Activated T-helper 2 cell treated with anti-CD3 and anti-CD28 coated beads, Interferon-gamma antibody, Interleukin-2, Interleukin-4, amounts not matched to agents 10 μg/mL and 5 μg/mL and 100 μg/mL, durations not matched to agents 14 hours and 24 hours and 36 hours (primary cell): ENCODE measurements at regions of chrX and their contacts with region 1.

Region 1: DNA sequence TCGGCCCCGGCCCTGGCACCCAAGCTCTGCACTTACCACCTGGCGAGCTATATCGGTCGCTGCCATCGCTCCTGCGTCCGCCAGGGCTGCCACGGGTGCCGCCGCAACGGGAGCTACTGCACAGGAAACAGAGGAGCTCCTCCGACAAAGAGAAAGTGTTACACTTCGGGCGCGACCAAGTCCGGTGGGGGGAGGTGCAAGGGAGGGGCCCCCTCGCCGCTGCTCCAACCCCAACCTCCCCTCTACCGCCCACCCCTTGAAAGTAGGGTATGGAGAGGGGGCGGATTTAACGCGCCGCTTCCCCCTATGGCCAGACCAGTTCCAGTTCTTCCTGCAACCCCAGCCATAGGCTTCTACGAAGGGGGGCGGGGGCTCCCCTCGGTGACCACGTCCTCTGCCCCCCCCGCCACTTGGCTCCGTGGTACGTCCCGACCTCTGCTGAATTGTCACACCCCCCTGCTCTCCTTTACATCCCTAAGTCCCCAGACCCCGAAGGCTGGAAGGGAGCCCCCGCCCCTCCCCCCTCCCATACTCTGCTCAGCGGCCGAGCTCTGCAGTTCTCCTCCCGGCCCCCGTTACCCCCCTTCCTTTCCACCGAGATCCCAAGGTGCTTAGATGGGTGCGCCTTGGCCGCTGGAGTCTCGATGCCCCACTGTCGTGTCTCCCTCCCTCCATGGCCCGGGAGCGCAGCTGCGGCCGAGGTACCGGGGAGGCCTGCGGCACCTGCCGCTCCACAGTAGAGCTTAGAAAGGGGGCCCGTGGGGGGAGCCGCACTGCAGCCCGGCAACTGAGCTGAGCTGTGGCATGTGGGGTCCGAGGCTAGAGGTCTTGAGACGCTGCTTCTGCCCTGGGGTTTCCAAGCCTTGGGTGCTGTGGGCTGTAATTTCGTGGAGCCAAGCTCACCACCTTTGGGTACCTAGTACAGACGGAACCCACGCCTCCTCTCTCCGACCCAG is at the start of gene SEPTIN6:
- DNase-seq: peak; percentile 80
- H3K4me3 Mint-ChIP-seq: peak within 1 kb of the TSS; percentile 90
- H3K27ac Mint-ChIP-seq: peak within 1 kb of the TSS; percentile 100
- H3K4me1 Mint-ChIP-seq: peaks cover 10% of the 10 kb centered on the region
- H3K27me3 Mint-ChIP-seq: no peaks in the 10 kb centered on the region
- total RNA-seq, gene SEPTIN6: 175 and 179 TPM in 2 replicates

Region 2: DNA sequence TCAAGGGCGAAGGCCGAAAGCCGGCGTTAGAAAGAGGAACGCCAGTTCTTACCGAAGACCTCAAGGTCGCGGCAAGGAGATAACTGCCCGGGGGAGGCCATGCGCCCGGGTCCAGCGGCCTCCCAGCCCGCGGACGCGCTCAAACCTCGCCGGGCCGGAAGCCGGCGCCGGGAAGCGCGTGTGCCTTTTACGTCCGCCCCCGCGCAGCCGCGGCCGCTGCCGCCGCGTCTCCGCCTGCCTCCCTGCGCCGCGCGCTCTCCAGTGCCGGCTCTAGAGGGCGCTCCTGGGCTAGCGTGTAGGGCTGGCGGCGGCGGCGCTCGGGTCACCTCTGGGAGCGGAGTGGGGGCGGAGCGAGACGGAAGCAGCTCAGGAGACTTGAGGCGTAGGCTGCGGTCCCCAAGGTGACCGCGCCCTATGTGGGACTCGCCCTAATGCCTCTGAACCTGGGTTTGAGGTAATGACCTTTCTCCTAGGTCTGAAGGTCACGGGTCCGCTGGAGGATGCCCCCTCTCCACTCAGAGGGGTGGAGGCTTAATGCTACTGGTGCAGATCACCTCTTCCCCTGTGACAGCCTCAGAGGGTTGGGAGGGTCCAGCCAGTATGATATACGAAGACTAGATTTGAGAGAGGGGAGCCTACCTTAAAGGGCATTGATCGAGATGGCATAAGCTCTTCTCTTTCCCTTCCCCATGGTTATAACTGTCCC is 224.2 kb before region 1 on chrX:
- intact Hi-C with region 1: loop called (anchors 5 kb)
- DNase-seq: peak; percentile 84
- H3K4me3 Mint-ChIP-seq: peak overlapping the region; percentile 88
- H3K27ac Mint-ChIP-seq: peak overlapping the region; percentile 90
- H3K4me1 Mint-ChIP-seq: peaks cover 8% of the 10 kb centered on the region
- H3K27me3 Mint-ChIP-seq: no peaks in the 10 kb centered on the region

Region 3: GRCh38 chrX:119565107-119565663 is 128.1 kb before region 1 on chrX and contains the start of gene STEEP1:
- intact Hi-C with region 1: loop called (anchors 2 kb)
- DNase-seq: peak; percentile 82
- H3K4me3 Mint-ChIP-seq: peak within 1 kb of the TSS; percentile 93
- H3K27ac Mint-ChIP-seq: peak within 1 kb of the TSS; percentile 89
- H3K4me1 Mint-ChIP-seq: peaks cover 11% of the 10 kb centered on the region
- H3K27me3 Mint-ChIP-seq: no peaks in the 10 kb centered on the region
- total RNA-seq, gene STEEP1: 21.9 and 22.0 TPM in 2 replicates

Region 4: GRCh38 chrX:119606280-119607015 is 86.9 kb before region 1 on chrX and contains the start of gene NKRF:
- intact Hi-C with region 1: loop called (anchors 2 kb)
- DNase-seq: peak; percentile 86
- H3K4me3 Mint-ChIP-seq: peak within 1 kb of the TSS; percentile 97
- H3K27ac Mint-ChIP-seq: peak within 1 kb of the TSS; percentile 96
- H3K4me1 Mint-ChIP-seq: peaks cover 20% of the 10 kb centered on the region
- H3K27me3 Mint-ChIP-seq: no peaks in the 10 kb centered on the region
- total RNA-seq, gene NKRF: 25.1 and 25.9 TPM in 2 replicates

Region 5: DNA sequence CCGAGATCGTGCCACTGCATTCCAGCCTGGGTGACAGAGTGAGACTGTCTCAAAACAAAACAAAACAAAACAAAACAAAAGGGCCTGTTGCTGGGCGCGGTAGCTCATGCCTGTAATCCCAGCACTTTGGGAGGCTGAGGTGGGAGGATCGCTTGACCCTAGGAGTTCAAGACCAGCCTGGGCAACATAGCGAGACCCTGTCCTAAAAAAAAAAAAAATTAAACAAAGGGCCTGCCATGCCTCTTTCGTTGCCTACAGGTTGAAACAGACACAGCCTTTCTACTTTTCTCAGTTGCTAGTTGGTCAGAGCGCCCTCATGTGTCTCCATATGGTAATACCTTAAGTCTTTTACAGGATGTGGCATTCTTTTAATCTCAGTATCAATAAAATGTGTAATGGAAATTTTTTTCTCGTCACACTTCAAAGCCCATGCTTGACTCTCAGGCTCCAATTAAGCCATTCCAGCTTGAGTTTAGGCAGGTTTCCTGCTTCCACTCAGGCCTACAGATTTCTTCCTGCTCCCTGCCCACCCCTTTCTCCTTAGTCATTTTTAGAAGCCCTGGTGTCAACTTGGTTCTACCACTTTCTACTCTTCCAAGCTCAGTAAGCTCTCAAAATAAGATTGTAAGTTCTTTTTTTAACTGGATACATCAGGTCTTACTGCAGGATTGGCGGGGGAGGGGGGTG is 60.4 kb after region 1 on chrX:
- intact Hi-C with region 1: loop called (anchors 2 kb)
- DNase-seq: peak; percentile 53
- H3K4me3 Mint-ChIP-seq: no peak overlapping the region
- H3K27ac Mint-ChIP-seq: peak overlapping the region; percentile 83
- H3K4me1 Mint-ChIP-seq: peaks cover 38% of the 10 kb centered on the region
- H3K27me3 Mint-ChIP-seq: no peaks in the 10 kb centered on the region